ENCODE measurements at regions of chr7 and their contacts with region 1.

Region 1: DNA sequence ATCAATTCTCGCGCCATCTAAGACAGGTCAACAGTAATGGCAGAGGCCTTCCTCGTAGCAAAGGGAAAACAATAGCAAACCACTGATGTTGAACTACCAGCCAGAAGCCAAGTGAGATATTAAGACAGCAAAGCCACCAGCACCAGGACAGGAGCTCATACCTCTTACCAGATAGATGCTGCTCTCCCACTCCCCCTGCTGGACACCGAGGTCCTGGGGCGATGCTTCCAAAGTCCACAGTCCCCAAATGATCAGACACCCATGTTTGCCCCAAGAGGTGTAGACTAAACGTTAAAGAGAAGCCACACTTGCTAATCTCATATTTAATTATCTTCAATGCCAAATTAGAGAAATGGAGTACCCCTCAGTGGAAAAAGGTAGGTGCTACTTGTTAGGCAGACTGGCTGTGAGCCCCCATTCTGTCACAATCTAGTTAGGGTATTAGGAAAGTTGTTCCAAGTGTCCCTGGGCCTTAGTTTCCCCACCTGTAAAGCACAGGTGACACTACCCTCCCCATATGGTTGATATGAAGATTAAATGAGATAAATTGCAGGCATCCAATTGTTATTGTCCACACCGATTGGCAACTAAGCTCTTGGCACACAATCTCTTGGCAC is 39.9 kb downstream of the TOMM7 start:
- H3K4me3 Mint-ChIP-seq: no peak overlapping the region
- H3K27ac Mint-ChIP-seq: no peak overlapping the region
- H3K4me1 Mint-ChIP-seq: no peaks in the 10 kb centered on the region
- H3K27me3 Mint-ChIP-seq: peaks cover 7% of the 10 kb centered on the region

Region 2: DNA sequence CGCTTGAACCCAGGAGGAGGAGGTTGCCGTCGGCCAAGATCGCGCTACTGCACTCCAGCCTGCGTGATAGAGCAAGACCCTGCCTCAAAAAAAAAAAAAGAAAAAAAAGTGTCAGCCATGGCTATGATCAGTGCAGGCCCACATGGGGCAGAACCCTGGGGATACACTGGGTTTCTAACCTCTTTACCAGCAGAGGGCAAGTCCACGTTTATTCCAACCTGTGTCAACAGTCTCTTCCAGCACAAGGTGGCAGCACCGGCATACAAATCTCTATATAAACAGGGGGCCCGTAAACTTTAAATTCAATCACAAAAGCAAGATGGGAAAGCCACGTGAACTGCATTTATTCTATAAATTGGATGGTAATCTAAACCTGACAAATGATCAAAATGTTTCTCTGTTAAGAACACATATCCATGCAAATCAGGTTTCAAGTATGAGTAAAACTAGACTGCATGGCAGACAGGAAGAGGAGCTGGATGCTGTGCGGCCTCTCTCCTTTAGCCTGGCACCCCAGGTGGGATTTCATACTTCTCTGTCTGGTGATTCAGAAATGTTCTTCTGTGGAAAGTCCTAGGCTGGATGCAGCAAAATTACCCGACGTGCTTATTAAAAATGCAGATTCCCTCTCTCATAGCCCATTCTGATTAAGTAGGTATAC is 222.8 kb before region 1 on chr7:
- intact Hi-C with region 1: loop called (anchors 1 kb)
- H3K4me3 Mint-ChIP-seq: no peak overlapping the region
- H3K27ac Mint-ChIP-seq: no peak overlapping the region
- H3K4me1 Mint-ChIP-seq: peaks cover 32% of the 10 kb centered on the region
- H3K27me3 Mint-ChIP-seq: peaks cover 40% of the 10 kb centered on the region

Region 3: GRCh38 chr7:22944022-22944421 is 161.3 kb after region 1 on chr7:
- intact Hi-C with region 1: no loop called
- H3K4me3 Mint-ChIP-seq: no peak overlapping the region
- H3K27ac Mint-ChIP-seq: no peak overlapping the region
- H3K4me1 Mint-ChIP-seq: no peaks in the 10 kb centered on the region
- H3K27me3 Mint-ChIP-seq: no peaks in the 10 kb centered on the region